Mammary epithelial cell (primary cell): ENCODE measurements at regions of chr11 and their contacts with region 1.

Region 1: GRCh38 chr11:18408558-18409242 is 3.4 kb upstream of the LDHC start:
- DNase-seq: peak; percentile 57
- H3K4me3 ChIP-seq: no peak overlapping the region
- H3K27ac ChIP-seq: no peak overlapping the region
- H3K4me1 ChIP-seq: peaks cover 16% of the 10 kb centered on the region
- H3K27me3 ChIP-seq: no peaks in the 10 kb centered on the region
- CTCF ChIP-seq: no peak

Region 2: DNA sequence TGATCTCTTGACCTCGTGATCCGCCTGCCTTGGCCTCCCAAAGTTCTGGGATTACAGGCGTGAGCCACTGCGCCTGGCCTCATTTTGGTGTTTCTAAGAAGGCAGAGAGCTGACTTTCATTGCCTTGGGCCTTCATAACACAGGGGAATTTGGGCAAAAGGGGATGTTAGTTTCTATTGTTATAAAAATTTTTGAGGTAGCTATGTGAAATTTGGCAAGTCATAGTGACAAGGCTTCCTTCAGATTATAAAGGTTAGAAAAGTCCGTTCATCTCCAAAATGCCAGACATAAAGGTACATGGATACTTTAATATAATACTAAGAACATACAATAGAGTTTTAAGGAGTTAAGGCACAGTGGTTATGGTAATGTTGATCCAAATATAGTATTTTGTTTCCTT is 20.6 kb after region 1 on chr11:
- CTCF ChIA-PET with region 1: interaction called, 12 read pairs
- dilution Hi-C with region 1: no loop called
- in situ Hi-C with region 1: no loop called
- intact Hi-C with region 1: no loop called
- DNase-seq: no peak
- H3K4me3 ChIP-seq: no peak overlapping the region
- H3K27ac ChIP-seq: no peak overlapping the region
- H3K4me1 ChIP-seq: no peaks in the 10 kb centered on the region
- H3K27me3 ChIP-seq: no peaks in the 10 kb centered on the region
- CTCF ChIP-seq: no peak

Region 3: GRCh38 chr11:18449251-18449650 is 40.6 kb after region 1 on chr11:
- CTCF ChIA-PET with region 1: no interaction called
- dilution Hi-C with region 1: loop called (anchors 5 kb)
- in situ Hi-C with region 1: no loop called
- intact Hi-C with region 1: no loop called
- DNase-seq: no peak
- H3K4me3 ChIP-seq: no peak overlapping the region
- H3K27ac ChIP-seq: no peak overlapping the region
- H3K4me1 ChIP-seq: no peaks in the 10 kb centered on the region
- H3K27me3 ChIP-seq: peaks cover 2% of the 10 kb centered on the region
- CTCF ChIP-seq: no peak